ENCODE measurements at regions of chr12 and their contacts with region 1.

Region 1: GRCh38 chr12:110280779-110281548 is at the start of gene ATP2A2:
- DNase-seq: peak; percentile 94 to 95
- ATAC-seq: peak; percentile 97
- H3K4me3 ChIP-seq: peak within 1 kb of the TSS; percentile 83 to 96
- H3K27ac ChIP-seq: peak within 1 kb of the TSS; percentile 96 to 97
- H3K4me1 ChIP-seq: peaks cover 0 to 4% of the 10 kb centered on the region in 2 donors
- H3K27me3 ChIP-seq: no peaks in the 10 kb centered on the region
- total RNA-seq, gene ATP2A2: 231 to 285 TPM

Region 2: DNA sequence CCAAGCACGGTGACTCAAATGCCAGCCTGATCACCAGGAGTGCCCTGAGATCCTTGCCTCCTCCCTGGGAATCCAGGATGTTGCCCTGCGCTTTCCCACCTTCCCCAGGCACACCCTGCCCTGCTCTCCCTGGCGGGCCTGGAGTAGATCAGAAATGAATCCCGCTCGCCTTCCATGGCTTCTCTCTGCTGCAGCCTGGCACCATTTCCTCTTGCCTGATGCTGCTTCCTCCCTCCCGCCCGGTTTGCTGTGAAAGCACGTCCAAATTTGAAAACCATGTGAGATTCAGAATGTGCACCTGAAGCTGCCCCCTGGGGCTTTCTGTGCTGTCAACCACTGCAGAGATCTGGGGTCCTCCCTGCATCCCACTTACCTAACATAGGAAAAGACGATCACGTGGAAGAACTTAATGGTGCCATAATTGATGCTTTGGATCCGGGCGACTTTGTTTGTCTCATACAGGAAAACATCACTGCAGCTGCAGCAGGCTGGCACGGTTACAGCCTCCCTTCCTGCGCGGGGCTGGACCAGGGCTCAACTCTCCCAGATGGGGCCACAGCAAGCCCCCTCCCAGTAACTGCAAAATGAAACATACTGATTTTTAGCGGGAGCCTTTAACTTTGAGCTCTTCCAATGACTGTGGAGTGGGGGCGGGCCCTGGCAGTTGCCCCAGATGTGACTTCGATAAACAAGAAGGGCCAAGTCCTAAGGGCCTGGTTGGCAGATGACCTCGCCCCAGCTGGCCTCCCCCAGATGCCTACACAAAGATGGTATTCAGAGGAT is 207.7 kb before region 1 on chr12:
- intact Hi-C with region 1: no loop called
- DNase-seq: peak in 1 of 2 donors; percentile 72
- ATAC-seq: peak; percentile 26
- H3K4me3 ChIP-seq: peak overlapping the region in 1 of 2 donors; percentile 41
- H3K27ac ChIP-seq: no peak overlapping the region
- H3K4me1 ChIP-seq: no peaks in the 10 kb centered on the region
- H3K27me3 ChIP-seq: no peaks in the 10 kb centered on the region

Region 3: DNA sequence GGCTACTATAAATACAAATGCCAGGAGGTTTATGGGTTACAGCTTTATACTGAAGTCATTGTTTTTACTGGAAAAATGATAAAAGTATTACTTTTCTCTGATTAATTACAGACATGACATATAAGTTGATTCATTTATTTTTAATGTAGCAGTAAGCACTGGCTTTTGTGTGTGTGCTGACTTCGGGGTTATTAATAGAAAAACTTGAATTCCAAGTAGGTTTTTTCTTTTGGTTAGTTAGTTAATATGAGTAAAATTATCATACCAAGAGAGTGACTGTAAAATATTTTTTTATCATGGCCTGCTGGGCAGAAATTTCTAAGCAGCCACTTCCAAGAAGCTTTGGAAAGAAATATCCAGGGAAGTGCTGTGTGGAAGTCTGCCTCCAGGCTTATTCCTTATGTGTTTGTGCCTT is 100.4 kb before region 1 on chr12:
- intact Hi-C with region 1: loop called in 1 of 2 experiments (anchors 5 kb)
- DNase-seq: no peak
- ATAC-seq: peak; percentile 63
- H3K4me3 ChIP-seq: no peak overlapping the region
- H3K27ac ChIP-seq: peak overlapping the region in 1 of 2 donors; percentile 76
- H3K4me1 ChIP-seq: peaks cover 0 to 9% of the 10 kb centered on the region in 2 donors
- H3K27me3 ChIP-seq: no peaks in the 10 kb centered on the region

Region 4: GRCh38 chr12:110224379-110225304 is 56.3 kb before region 1 on chr12:
- intact Hi-C with region 1: loop called (anchors 1 to 5 kb)
- DNase-seq: no peak
- ATAC-seq: peak; percentile 87
- H3K4me3 ChIP-seq: peak overlapping the region in 1 of 2 donors; percentile 64
- H3K27ac ChIP-seq: peak overlapping the region; percentile 39 to 82
- H3K4me1 ChIP-seq: peaks cover 3 to 9% of the 10 kb centered on the region in 2 donors
- H3K27me3 ChIP-seq: no peaks in the 10 kb centered on the region

Region 5: DNA sequence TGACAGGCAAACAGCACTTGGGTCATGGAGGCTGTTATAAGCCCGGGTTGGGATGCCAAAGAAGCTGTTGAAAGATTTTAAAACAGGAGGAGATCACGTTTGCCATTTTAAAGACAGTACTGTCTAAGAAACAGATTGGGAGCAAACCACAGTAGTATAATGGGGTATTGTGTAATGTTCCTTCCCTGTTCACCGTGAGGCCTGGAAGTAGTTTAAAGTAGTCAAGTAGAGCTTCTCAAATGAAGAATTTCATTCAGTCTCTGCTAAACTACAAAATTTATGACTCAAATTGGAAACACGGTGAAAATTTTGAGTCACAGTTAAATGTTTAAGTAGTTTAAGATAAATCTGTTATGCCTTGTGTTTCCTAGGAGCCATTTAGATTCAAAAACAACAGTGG is 35.9 kb after region 1 on chr12:
- intact Hi-C with region 1: loop called in 1 of 2 experiments (anchors 5 kb)
- DNase-seq: no peak
- ATAC-seq: peak; percentile 75
- H3K4me3 ChIP-seq: no peak overlapping the region
- H3K27ac ChIP-seq: peak overlapping the region in 1 of 2 donors; percentile 78
- H3K4me1 ChIP-seq: peaks cover 5 to 13% of the 10 kb centered on the region in 2 donors
- H3K27me3 ChIP-seq: no peaks in the 10 kb centered on the region